CD4-positive, alpha-beta memory T cell (primary cell): ENCODE measurements at regions of chr1 and their contacts with region 1.

Region 1: DNA sequence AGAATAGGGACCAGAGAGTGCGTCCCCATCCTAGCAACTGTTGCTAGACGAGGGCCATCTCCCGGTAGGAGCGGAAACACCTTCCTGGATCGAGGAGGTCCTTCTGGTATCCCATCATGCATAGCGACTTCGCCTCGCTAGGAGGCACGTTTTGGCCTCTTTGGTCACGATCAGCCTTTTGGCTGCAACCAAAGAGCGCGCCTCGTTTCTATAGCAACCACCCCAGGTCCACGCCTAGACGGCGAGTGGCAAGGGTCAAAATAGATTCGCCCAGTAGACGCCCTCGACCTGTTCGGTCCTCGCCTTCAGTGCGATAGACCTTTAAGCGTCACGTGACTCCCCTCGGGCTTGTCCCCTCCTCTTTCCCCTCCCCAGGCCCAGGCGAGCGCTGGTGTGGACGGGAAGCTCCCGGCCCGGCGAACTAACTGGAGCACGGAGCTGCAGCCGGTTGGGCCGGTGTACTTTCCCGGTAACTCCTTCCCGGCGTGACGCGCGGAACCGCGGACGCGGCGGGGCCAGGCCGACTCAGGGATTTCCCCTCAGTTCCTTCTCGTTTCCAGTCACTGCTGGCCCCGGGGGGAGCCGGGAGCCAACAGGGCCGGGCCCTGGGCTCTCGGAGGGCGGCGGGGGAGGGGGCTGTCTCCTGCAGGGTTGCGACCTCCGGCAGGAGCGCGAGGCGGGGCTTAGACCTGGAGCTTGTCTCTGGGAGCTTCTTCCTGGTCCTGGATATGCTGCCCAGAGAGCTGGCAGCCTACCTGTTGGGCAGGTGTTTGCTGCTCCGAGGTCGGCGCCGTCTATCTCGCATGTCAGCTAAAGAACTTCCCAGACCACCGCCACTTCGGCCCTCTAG is at the start of gene DNAJC16:
- DNase-seq: peak; percentile 97 to 99 (median 98)
- H3K4me3 ChIP-seq: peak within 1 kb of the TSS; percentile 61 to 76
- H3K4me3 Mint-ChIP-seq: peak within 1 kb of the TSS; percentile 85 to 97 (median 94)
- H3K27ac ChIP-seq: peak within 1 kb of the TSS; percentile 71
- H3K27ac Mint-ChIP-seq: peak within 1 kb of the TSS; percentile 86 to 100 (median 100)
- H3K4me1 ChIP-seq: peaks cover 40% of the 10 kb centered on the region
- H3K4me1 Mint-ChIP-seq: peaks cover 32 to 66% (median 45%) of the 10 kb centered on the region in 4 donors
- H3K27me3 ChIP-seq: no peaks in the 10 kb centered on the region
- H3K27me3 Mint-ChIP-seq: no peaks in the 10 kb centered on the region
- total RNA-seq, gene DNAJC16: 29.6 to 31.0 TPM

Region 2: GRCh38 chr1:15409388-15410222 is 117.1 kb before region 1 on chr1 and contains the start of gene EFHD2:
- CTCF ChIA-PET with region 1: no interaction called
- POLR2A ChIA-PET with region 1: no interaction called
- intact Hi-C with region 1: loop called (anchors 2 kb)
- DNase-seq: peak; percentile 84 to 98 (median 86)
- H3K4me3 ChIP-seq: peak within 1 kb of the TSS; percentile 76 to 94
- H3K4me3 Mint-ChIP-seq: peak within 1 kb of the TSS; percentile 90 to 95 (median 93)
- H3K27ac ChIP-seq: peak within 1 kb of the TSS; percentile 92
- H3K27ac Mint-ChIP-seq: peak within 1 kb of the TSS; percentile 97 to 99 (median 98)
- H3K4me1 ChIP-seq: peaks cover 43% of the 10 kb centered on the region
- H3K4me1 Mint-ChIP-seq: peaks cover 26 to 74% (median 44%) of the 10 kb centered on the region in 4 donors
- H3K27me3 ChIP-seq: no peaks in the 10 kb centered on the region
- H3K27me3 Mint-ChIP-seq: no peaks in the 10 kb centered on the region
- total RNA-seq, gene EFHD2: 46.4 to 50.3 TPM

Region 3: GRCh38 chr1:15603050-15603965 is 76.6 kb after region 1 on chr1:
- CTCF ChIA-PET with region 1: interaction called, 5 read pairs
- POLR2A ChIA-PET with region 1: interaction called, 13 read pairs
- intact Hi-C with region 1: loop called (anchors 1 kb)
- DNase-seq: peak; percentile 90 to 95 (median 92)
- H3K4me3 ChIP-seq: peak overlapping the region; percentile 38 to 95
- H3K4me3 Mint-ChIP-seq: peak overlapping the region; percentile 65 to 86 (median 83)
- H3K27ac ChIP-seq: peak overlapping the region; percentile 61
- H3K27ac Mint-ChIP-seq: peak overlapping the region; percentile 63 to 91 (median 88)
- H3K4me1 ChIP-seq: peaks cover 11% of the 10 kb centered on the region
- H3K4me1 Mint-ChIP-seq: peaks cover 5 to 17% (median 10%) of the 10 kb centered on the region in 4 donors
- H3K27me3 ChIP-seq: no peaks in the 10 kb centered on the region
- H3K27me3 Mint-ChIP-seq: no peaks in the 10 kb centered on the region

Region 4: DNA sequence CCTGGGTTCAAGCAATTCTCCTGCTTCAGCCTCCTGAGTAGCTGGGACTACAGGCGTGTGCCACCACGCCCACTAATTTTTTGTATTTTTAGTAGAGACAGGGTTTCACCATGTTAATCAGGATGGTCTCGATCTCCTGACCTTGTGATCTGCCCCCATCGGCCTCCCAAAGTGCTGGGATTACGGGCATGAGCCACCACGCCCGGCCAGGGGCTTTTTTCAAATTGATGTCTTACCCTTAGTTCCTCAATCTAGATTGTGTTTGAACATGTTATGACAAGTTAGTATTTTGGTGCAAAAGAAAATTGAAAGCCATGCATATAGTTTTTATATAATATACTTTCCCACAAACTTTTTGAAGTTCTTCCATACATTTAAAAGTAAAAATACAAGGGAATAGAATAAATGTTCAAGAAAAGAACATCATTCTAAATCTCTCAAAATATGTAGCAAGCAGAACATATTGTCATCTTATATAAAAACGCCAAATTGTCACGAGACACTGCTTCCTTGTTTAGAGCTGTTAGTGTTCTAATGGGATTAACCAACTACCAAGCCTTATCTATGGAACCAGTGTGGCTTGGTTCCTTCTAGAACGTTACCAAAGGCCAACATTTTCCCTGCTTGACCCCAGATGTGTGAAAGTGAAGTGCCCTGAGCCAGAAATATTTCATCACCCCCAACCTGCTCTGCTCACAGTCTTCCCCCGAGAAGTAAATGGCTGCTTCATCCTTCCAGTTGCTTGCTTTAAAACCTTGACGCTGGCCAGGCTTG is 147.9 kb after region 1 on chr1:
- CTCF ChIA-PET with region 1: no interaction called
- POLR2A ChIA-PET with region 1: no interaction called
- intact Hi-C with region 1: no loop called
- DNase-seq: no peak
- H3K4me3 ChIP-seq: no peak overlapping the region
- H3K4me3 Mint-ChIP-seq: no peak overlapping the region
- H3K27ac ChIP-seq: no peak overlapping the region
- H3K27ac Mint-ChIP-seq: no peak overlapping the region
- H3K4me1 ChIP-seq: no peaks in the 10 kb centered on the region
- H3K4me1 Mint-ChIP-seq: peaks cover 0 to 2% (median 0%) of the 10 kb centered on the region in 4 donors
- H3K27me3 ChIP-seq: no peaks in the 10 kb centered on the region
- H3K27me3 Mint-ChIP-seq: no peaks in the 10 kb centered on the region

Region 5: DNA sequence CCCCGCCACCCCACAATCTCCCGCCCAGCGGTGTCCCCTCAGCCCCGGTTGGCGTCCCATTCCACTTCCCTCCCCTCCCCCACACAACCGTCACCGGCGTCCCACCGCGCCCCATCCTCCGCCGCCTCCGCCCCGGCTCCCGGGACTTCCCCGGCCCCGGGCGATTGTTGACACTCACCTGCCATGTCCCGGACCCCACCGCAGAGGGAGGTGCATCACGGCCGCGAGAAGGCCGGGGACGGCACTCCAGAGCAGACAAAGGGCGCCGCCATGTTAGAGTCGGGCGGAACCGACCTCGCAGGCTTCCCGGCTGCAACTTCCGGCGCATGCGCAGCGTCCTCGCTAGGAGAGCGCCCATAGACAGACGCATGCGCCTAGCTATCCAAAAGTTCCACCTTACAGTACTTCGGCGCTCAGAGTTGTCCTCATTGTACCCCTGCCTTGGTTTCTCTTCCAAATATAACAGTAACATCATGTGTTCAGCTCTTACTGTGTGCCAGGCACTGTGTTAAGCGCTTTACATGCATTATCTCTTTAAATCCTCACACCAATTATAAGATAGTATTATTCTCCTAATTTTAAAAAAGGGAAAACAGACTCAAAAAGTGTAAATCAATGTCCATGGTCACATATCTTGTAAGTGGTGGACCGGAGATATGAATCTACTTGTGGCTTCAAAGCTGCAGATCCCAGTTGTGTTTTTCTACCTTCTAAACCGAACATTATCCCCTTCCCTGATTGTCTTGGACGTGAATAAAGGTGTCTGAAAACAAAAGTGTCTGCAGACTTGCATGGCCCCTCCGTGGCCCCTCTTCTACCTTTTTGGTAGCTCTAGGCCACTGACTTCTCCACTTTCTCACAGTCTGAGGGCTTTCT is 449.3 kb after region 1 on chr1 and contains the start of gene ZBTB17:
- CTCF ChIA-PET with region 1: no interaction called
- POLR2A ChIA-PET with region 1: no interaction called
- intact Hi-C with region 1: loop called (anchors 10 kb)
- DNase-seq: peak; percentile 94 to 96 (median 95)
- H3K4me3 ChIP-seq: peak within 1 kb of the TSS; percentile 43 to 83
- H3K4me3 Mint-ChIP-seq: peak within 1 kb of the TSS; percentile 87 to 97 (median 89)
- H3K27ac ChIP-seq: peak within 1 kb of the TSS; percentile 70
- H3K27ac Mint-ChIP-seq: peak within 1 kb of the TSS; percentile 88 to 96 (median 94)
- H3K4me1 ChIP-seq: peaks cover 25% of the 10 kb centered on the region
- H3K4me1 Mint-ChIP-seq: peaks cover 22 to 43% (median 32%) of the 10 kb centered on the region in 4 donors
- H3K27me3 ChIP-seq: no peaks in the 10 kb centered on the region
- H3K27me3 Mint-ChIP-seq: no peaks in the 10 kb centered on the region
- total RNA-seq, gene ZBTB17: 52.6 to 61.0 TPM

Region 6: DNA sequence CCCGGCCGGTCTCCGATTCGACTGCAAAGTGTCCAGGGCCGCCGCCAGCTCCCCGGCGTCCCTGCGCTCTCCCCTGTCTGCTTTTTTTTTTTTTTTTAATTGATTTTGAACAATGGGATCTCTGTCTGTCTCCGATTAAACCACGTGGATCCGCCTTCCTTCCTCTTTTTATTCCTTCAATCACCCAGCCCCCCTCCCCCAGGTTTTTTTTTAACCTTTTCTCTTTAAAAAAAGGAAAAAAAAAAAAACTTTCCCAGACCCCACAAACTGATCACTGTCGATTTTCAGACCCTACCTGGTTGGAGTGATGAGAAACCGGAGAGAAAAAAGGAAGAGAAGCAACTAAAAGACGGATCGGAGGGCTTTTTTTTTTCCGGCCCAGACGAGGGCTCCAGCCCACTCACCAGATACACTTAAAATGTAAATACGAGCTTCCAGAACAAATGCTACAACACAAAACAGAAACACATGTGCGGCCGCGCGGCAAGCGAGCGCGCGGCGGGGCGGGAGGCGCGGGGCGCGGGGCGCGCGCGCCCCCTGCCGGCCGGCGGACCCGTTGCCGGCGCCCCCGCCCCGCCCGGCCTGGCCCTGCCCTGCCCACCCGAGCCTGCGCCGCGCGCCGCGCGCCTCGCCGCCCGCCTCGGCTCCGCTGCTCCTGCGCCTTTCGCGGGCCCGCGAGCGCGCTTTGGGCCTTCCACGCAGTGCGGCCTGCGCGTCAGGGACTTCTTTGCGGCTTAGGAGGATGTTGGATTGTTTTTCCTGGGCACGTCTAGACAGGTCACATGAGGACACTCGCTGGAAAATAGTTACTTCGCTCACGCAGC is 1912.7 kb after region 1 on chr1 and contains the start of gene RCC2:
- CTCF ChIA-PET with region 1: no interaction called
- POLR2A ChIA-PET with region 1: no interaction called
- intact Hi-C with region 1: loop called (anchors 10 kb)
- DNase-seq: peak; percentile 70 to 78 (median 72)
- H3K4me3 ChIP-seq: peak within 1 kb of the TSS; percentile 79 to 81
- H3K4me3 Mint-ChIP-seq: peak within 1 kb of the TSS; percentile 94 to 98 (median 96)
- H3K27ac ChIP-seq: peak within 1 kb of the TSS; percentile 78
- H3K27ac Mint-ChIP-seq: peak within 1 kb of the TSS; percentile 95 to 98 (median 97)
- H3K4me1 ChIP-seq: peaks cover 27% of the 10 kb centered on the region
- H3K4me1 Mint-ChIP-seq: peaks cover 21 to 49% (median 32%) of the 10 kb centered on the region in 4 donors
- H3K27me3 ChIP-seq: no peaks in the 10 kb centered on the region
- H3K27me3 Mint-ChIP-seq: no peaks in the 10 kb centered on the region
- total RNA-seq, gene RCC2: 38.5 to 41.2 TPM